Endothelial cell of umbilical vein (primary cell): ENCODE measurements at regions of chr21 and their contacts with region 1.

Region 1: DNA sequence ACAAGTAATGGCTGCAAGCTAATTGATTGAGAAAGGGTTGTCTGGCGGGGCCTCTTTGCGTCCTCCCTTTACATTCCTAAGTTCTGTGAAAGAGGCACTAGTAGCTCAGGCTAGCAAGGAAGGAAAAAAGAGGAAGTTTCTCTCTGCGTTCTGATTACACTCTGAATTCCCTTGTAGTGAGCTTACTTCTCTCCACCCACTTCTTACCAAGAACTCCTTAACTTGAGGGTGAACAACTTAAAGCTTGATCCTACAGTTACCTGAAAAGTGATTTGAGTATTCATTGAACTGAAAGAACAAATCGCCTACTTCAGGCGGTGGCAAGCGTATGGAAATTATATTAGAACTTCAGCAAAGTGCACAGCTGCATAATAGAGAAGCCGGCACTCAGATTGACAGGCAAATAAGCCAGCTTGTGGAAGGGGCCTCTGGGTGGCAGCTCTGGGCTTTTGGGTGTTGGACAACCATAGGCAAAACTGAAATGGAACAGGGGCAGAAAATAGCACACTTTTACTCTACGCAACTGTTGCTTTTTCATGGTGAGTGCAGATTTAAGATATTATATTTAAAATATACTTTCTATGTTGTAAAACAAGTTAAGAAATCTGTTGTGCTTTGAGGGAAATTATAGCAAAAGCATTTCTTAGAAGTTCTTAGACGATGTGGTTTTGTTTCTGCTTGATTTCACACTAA is 464.5 kb downstream of the USP25 start:
- DNase-seq: peak; percentile 91
- H3K4me3 ChIP-seq: peak overlapping the region; percentile 59 to 94 (median 63)
- H3K27ac ChIP-seq: peak overlapping the region; percentile 92
- H3K4me1 ChIP-seq: peaks cover 33% of the 10 kb centered on the region
- H3K27me3 ChIP-seq: no peaks in the 10 kb centered on the region
- CTCF ChIP-seq: peak; percentile 13 to 41
- POLR2A ChIP-seq: peak; percentile 54

Region 2: GRCh38 chr21:16082038-16082816 is 112.0 kb before region 1 on chr21:
- CTCF ChIA-PET with region 1: interaction called, 27 read pairs
- POLR2A ChIA-PET with region 1: no interaction called
- dilution Hi-C with region 1: no loop called
- intact Hi-C with region 1: loop called (anchors 1 kb)
- DNase-seq: peak; percentile 78
- H3K4me3 ChIP-seq: no peak overlapping the region
- H3K27ac ChIP-seq: peak overlapping the region; percentile 48
- H3K4me1 ChIP-seq: peaks cover 8% of the 10 kb centered on the region
- H3K27me3 ChIP-seq: no peaks in the 10 kb centered on the region
- CTCF ChIP-seq: peak in 1 of 2 donors; percentile 4
- POLR2A ChIP-seq: no peak

Region 3: GRCh38 chr21:16159213-16159970 is 34.8 kb before region 1 on chr21:
- CTCF ChIA-PET with region 1: no interaction called
- POLR2A ChIA-PET with region 1: no interaction called
- dilution Hi-C with region 1: no loop called
- intact Hi-C with region 1: no loop called
- DNase-seq: no peak
- H3K4me3 ChIP-seq: no peak overlapping the region
- H3K27ac ChIP-seq: no peak overlapping the region
- H3K4me1 ChIP-seq: no peaks in the 10 kb centered on the region
- H3K27me3 ChIP-seq: no peaks in the 10 kb centered on the region
- CTCF ChIP-seq: no peak
- POLR2A ChIP-seq: no peak

Region 4: DNA sequence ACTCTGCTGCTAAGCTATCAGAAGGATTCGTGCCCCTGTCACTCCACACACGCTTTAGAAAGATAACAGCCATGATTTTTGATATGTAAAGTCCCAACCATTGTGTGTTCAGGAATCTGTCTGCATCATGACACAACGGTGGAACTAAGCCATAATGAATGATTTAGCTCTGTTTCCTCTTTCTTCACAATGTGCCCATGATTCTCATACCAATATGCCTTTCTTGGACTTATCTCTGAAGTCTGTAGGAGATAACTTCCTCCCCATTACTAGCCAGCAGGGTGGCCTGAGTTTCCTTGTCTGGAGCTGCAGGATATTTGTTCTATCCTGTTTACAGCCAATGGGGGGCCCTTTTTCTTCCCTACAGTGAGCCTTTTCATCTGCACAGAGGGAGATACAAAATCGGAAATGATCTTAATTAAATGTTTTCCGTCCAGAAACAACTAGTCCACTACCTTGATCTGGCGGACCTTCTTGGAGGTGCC is 47.3 kb after region 1 on chr21:
- CTCF ChIA-PET with region 1: interaction called, 13 read pairs
- POLR2A ChIA-PET with region 1: no interaction called
- dilution Hi-C with region 1: no loop called
- intact Hi-C with region 1: loop called (anchors 1 kb)
- DNase-seq: peak; percentile 98
- H3K4me3 ChIP-seq: peak overlapping the region in 1 of 3 experiments; percentile 38
- H3K27ac ChIP-seq: peak overlapping the region; percentile 73
- H3K4me1 ChIP-seq: peaks cover 22% of the 10 kb centered on the region
- H3K27me3 ChIP-seq: no peaks in the 10 kb centered on the region
- CTCF ChIP-seq: no peak
- POLR2A ChIP-seq: peak; percentile 44

Region 5: GRCh38 chr21:16330082-16330907 is 136.1 kb after region 1 on chr21:
- CTCF ChIA-PET with region 1: interaction called, 57 read pairs
- POLR2A ChIA-PET with region 1: no interaction called
- dilution Hi-C with region 1: no loop called
- intact Hi-C with region 1: loop called (anchors 1 kb)
- DNase-seq: peak; percentile 87
- H3K4me3 ChIP-seq: no peak overlapping the region
- H3K27ac ChIP-seq: no peak overlapping the region
- H3K4me1 ChIP-seq: no peaks in the 10 kb centered on the region
- H3K27me3 ChIP-seq: no peaks in the 10 kb centered on the region
- CTCF ChIP-seq: peak; percentile 51 to 56
- POLR2A ChIP-seq: no peak